WTC11 (cell line): ENCODE measurements at regions of chr4 and their contacts with region 1.

Region 1: DNA sequence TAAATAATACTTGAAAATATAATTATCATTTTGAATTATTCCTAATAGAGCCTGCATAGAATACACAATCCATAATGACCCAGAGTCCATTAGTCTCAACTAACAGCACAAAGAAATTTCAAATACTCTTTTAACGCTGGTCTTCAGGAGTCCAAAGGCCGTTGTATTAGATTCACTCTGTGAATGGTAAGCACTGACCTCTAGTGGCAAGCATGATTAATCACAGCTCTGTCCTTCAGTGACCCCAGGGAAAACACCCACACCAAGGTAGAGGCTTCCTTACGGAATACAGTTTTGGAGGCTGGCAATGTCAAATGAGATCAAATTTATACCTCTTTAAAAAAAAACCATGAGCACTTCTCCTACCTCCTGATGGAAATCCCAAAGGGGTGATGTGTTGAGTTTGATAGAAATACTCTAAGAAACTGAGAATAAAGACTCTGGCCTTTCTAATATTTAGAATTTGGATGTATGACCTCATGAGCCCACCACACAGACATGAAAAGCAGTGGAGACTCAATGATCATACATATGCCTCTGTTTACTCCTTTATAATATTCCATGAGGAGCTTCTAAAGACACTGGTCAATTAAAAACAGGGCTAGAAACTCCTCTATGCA is 147.2 kb upstream of the DKK2 start:
- DNase-seq: peak; percentile 10
- ATAC-seq: peak; percentile 98
- H3K4me3 Mint-ChIP-seq: no peak overlapping the region
- H3K27ac Mint-ChIP-seq: no peak overlapping the region
- H3K4me1 Mint-ChIP-seq: no peaks in the 10 kb centered on the region
- H3K27me3 Mint-ChIP-seq: no peaks in the 10 kb centered on the region
- CTCF ChIP-seq: peak; percentile 63

Region 2: GRCh38 chr4:107034091-107034995 is 148.9 kb before region 1 on chr4:
- CTCF ChIA-PET with region 1: interaction called, 13 read pairs
- POLR2A ChIA-PET with region 1: no interaction called
- DNase-seq: peak; percentile 63
- ATAC-seq: peak; percentile 67
- H3K4me3 Mint-ChIP-seq: peak overlapping the region; percentile 90
- H3K27ac Mint-ChIP-seq: no peak overlapping the region
- H3K4me1 Mint-ChIP-seq: peaks cover 30% of the 10 kb centered on the region
- H3K27me3 Mint-ChIP-seq: peaks cover 58% of the 10 kb centered on the region
- CTCF ChIP-seq: no peak

Region 3: DNA sequence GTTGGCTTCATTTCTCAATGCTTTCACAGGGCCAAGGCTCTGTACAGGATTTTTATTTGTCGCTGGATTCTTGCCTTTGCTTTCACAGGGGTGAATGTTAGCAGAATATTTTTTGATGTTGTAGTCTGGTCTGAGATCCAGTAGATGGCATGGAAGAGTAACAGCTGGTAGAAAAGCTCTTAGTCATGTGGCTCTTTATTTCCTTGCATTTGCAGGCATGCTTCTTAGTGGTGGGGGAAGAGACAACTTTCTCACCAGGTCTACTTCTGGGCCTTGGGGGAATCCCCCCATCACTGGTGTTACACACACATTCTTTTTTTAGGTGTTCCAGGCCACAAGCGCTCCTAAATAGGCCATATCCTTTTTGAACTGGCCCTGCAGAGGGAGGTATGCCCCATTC is 88.9 kb before region 1 on chr4:
- CTCF ChIA-PET with region 1: interaction called, 17 read pairs
- POLR2A ChIA-PET with region 1: no interaction called
- DNase-seq: no peak
- ATAC-seq: peak; percentile 83
- H3K4me3 Mint-ChIP-seq: no peak overlapping the region
- H3K27ac Mint-ChIP-seq: no peak overlapping the region
- H3K4me1 Mint-ChIP-seq: peaks cover 19% of the 10 kb centered on the region
- H3K27me3 Mint-ChIP-seq: no peaks in the 10 kb centered on the region
- CTCF ChIP-seq: no peak